Right ventricle myocardium superior (tissue), 1 donor: ENCODE measurements at regions of chr21 and their contacts with region 1.

Region 1: GRCh38 chr21:29091032-29091431 is 17.6 kb upstream of the CCT8 start:
- DNase-seq: no peak
- ATAC-seq: no peak

Region 2: GRCh38 chr21:29056005-29056404 is 35.0 kb before region 1 on chr21:
- intact Hi-C with region 1: no loop called
- DNase-seq: no peak
- ATAC-seq: no peak

Region 3: DNA sequence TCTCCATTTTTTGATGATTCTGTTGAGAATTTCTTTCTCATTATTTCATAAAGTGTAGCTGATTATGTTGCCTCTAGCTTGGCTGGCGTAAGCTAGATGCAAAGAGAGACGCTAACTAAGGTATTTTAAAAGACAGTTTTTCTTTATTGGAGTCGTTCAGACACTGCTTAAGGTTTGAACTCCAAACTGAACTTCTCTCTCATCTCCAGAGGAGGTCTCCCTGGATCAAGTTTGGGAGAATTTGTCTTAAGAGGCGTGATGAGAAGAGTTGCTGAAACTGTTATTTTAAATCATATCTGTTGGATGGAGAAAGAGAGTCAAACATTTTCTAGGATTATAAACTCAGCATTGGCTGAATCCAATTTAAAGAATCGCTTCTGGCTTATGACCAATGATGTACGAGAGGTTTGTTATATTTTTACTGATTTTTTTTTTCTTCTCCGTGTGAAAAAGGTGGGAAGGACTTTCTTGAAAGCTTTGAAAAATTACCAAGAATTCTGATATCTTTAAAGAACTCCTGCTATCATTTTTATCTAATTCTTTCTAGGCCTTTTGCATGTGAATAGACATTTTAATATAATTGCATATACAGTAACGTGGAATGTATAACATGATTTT is 73.4 kb after region 1 on chr21:
- intact Hi-C with region 1: loop called (anchors 10 kb)
- DNase-seq: no peak
- ATAC-seq: peak; percentile 80

Region 4: GRCh38 chr21:29332461-29333362 is 241.7 kb after region 1 on chr21:
- intact Hi-C with region 1: no loop called
- DNase-seq: no peak
- ATAC-seq: peak; percentile 48